AG04450 (cell line): ENCODE measurements at regions of chr1 and their contacts with region 1.

Region 1: DNA sequence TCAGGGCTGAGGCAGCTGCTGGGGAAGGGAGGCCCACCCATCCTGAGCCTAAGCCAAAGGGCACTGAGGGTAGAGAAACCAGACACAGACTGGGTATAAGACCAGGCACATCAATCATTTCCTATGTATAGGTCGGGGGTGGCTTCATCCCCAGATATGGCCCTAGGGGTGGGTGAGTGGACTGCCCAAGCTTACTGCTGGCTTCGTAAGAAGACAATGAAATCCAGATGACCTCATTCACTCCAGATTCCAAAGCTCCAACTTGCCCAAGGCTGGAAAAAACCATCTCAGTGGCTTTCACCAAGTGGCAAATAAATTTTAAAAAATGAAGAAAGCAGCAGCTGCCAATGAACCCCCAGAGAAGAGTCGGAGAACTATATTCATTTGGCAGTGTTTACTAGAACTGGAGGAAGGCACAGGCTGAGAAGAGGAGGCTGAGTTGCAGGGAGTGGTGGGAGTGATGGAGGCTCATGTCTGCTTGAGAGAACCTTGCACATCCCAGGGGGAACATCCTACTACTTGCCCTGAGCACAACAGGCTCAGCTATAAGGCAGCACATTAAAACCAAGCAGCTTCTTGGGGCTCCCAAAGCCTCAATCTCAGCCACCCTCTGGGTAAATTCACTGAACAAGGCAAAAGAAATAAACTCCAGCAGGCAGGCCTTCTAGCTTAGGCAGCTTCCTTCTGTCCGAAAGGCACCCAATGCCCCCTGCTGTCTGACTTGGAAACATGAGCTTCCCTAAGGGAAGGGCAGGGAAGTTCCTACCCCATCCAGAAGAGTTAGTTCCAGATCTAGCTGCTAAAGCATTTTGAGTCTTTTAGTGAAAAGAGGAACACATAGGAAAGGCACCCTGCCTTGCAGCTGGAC is 14.1 kb downstream of the PEA15 start:
- DNase-seq: peak; percentile 55
- H3K4me3 ChIP-seq: no peak overlapping the region
- H3K27ac ChIP-seq: peak overlapping the region; percentile 71
- H3K27me3 ChIP-seq: no peaks in the 10 kb centered on the region
- CTCF ChIP-seq: peak; percentile 84

Region 2: GRCh38 chr1:159646687-159647086 is 572.6 kb before region 1 on chr1:
- CTCF ChIA-PET with region 1: no interaction called
- POLR2A ChIA-PET with region 1: no interaction called
- DNase-seq: no peak
- H3K4me3 ChIP-seq: no peak overlapping the region
- H3K27ac ChIP-seq: no peak overlapping the region
- H3K27me3 ChIP-seq: no peaks in the 10 kb centered on the region
- CTCF ChIP-seq: no peak

Region 3: DNA sequence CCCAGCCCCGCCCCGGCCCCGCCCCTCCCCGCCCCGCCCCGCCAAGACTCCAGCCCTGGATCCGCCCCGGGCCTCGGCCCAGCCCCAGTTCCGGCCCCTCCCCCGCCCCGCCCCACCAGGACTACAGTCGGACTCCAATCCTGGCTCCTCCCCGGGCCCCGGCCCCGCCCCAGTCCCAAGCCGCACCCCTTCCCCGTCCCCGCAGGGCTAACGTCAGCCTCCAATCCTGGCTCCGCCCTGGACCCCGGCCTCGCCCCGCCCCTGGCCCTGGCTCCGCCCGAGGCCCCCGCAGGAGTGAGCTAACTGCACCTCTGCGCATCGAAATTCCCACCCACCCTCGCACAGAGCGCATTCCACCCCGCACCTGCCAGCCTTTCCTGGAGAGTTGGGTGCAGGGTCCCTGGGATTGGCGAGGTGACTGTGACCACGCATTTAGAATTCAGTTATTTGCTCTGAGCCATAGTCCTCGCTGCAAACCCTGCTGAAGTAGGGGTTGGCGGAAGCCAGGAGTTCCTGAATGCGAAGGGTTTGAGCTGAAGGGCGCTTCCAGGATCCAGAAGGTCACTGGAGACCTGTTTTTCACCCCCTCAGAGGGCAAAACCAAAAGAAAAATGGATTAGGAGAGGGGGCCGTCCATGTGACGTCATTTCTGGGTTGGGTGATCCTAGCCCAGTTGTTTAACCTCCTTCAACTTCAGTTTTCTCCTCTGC is 120.3 kb before region 1 on chr1:
- CTCF ChIA-PET with region 1: interaction called, 212 read pairs
- POLR2A ChIA-PET with region 1: interaction called, 11 read pairs
- DNase-seq: peak; percentile 79
- H3K4me3 ChIP-seq: peak overlapping the region; percentile 78
- H3K27ac ChIP-seq: peak overlapping the region; percentile 47
- H3K27me3 ChIP-seq: no peaks in the 10 kb centered on the region
- CTCF ChIP-seq: no peak

Region 4: GRCh38 chr1:160131803-160132565 is 87.3 kb before region 1 on chr1:
- CTCF ChIA-PET with region 1: no interaction called
- POLR2A ChIA-PET with region 1: no interaction called
- DNase-seq: no peak
- H3K4me3 ChIP-seq: no peak overlapping the region
- H3K27ac ChIP-seq: no peak overlapping the region
- H3K27me3 ChIP-seq: peaks cover 15% of the 10 kb centered on the region
- CTCF ChIP-seq: no peak

Region 5: DNA sequence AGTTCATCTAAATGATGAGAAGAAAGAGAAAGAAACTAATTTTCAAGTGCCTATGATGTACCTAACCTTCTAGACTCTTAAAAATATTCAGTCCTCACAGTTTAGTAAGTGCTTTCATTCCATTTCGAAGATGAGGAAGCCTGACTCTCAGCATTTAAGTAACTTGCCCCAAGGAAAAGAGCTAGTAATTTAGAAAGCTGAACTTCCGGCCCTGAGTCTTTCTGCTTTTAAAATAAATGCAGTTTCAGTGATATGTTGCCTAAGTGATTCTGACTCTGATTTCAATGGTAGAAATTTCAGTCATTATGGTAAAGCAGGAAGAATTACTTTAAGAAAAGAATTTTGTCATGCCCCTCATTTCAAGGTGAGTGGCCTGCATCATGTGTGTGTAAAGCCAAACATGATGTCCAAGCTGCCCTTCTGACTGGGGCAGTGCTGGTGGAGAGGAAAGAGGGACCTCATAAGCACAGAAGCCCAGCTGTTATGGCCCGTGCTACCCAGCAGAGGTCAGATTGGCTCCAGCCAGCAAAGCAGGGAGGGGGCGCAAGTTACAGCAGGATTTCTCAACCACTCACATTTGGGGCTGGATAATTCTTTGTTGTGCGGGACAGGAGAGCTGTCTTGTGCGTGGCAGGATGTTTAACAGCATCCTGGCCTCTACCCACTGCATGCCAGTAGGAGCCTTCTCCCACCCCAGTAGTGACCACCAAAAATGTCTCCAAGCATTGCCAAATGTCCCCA is 57.2 kb before region 1 on chr1:
- CTCF ChIA-PET with region 1: interaction called, 22 read pairs
- POLR2A ChIA-PET with region 1: no interaction called
- DNase-seq: no peak
- H3K4me3 ChIP-seq: no peak overlapping the region
- H3K27ac ChIP-seq: no peak overlapping the region
- H3K27me3 ChIP-seq: peaks cover 12% of the 10 kb centered on the region
- CTCF ChIP-seq: peak; percentile 57

Region 6: GRCh38 chr1:160232911-160233310 is 13.6 kb after region 1 on chr1:
- CTCF ChIA-PET with region 1: interaction called, 53 read pairs
- POLR2A ChIA-PET with region 1: interaction called, 3 read pairs
- DNase-seq: no peak
- H3K4me3 ChIP-seq: no peak overlapping the region
- H3K27ac ChIP-seq: no peak overlapping the region
- H3K27me3 ChIP-seq: no peaks in the 10 kb centered on the region
- CTCF ChIP-seq: no peak

Region 7: DNA sequence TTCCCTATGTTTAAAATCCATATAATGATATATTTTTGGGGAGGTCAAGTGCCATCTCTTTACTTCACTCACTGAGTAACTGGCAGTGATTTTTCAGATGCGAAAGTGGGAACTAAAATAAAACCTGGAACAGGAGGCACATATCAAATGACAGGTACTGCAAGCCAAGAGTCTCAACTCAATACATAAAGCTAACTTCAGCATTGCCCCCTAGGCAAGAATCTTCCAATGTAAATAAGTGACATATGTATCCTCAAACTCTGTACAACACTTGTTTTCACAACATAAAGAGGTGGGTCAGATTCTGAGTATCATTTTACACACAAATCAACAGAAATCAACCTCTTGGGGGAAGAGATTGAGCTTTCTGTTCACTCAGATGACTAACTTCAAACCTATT is 24.9 kb after region 1 on chr1:
- CTCF ChIA-PET with region 1: interaction called, 76 read pairs
- POLR2A ChIA-PET with region 1: no interaction called
- DNase-seq: no peak
- H3K4me3 ChIP-seq: no peak overlapping the region
- H3K27ac ChIP-seq: no peak overlapping the region
- H3K27me3 ChIP-seq: no peaks in the 10 kb centered on the region
- CTCF ChIP-seq: no peak